ENCODE measurements at regions of chr9 and their contacts with region 1.

Region 1: GRCh38 chr9:70398145-70398556 is 16.3 kb downstream of the KLF9 start:
- DNase-seq: peak; percentile 55
- ATAC-seq: peak; percentile 98
- H3K4me3 ChIP-seq: no peak overlapping the region
- H3K27ac ChIP-seq: no peak overlapping the region; the same call in 1 of the 2 replicates
- H3K4me1 ChIP-seq: peaks cover 13% of the 10 kb centered on the region
- H3K27me3 ChIP-seq: no peaks in the 10 kb centered on the region
- CTCF ChIP-seq: no peak
- EP300 ChIP-seq: peak in 1 of 2 experiments; percentile 27; a peak in 1 of 4 replicates
- POLR2A ChIP-seq: no peak
- RAD21 ChIP-seq: no peak

Region 2: DNA sequence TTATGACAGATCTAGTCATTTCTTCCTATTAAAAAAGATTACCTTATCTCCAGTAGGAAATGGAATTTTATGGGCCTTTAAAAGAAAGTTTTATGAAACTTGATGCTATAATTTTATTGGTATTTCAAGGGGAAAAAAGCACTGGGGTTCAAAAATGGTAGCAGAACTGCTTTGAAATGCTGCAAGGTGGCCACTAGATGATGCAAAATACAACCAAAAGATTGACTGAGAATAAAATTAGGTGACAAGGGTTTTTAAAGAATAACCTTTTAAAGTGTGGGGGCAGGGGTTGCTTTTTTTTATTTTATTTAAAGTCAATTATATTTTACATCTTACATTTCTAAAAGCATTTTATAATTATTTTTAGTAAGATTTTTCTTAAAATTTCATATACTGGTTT is 45.3 kb before region 1 on chr9:
- CTCF ChIA-PET with region 1: no interaction called
- POLR2A ChIA-PET with region 1: no interaction called
- RAD21 ChIA-PET with region 1: no interaction called
- SMC1A ChIA-PET with region 1: interaction called, 3 read pairs
- in situ Hi-C with region 1: loop called (anchors 5 kb)
- intact Hi-C with region 1: no loop called
- DNase-seq: no peak
- ATAC-seq: no peak
- H3K4me3 ChIP-seq: no peak overlapping the region
- H3K27ac ChIP-seq: no peak overlapping the region
- H3K4me1 ChIP-seq: no peaks in the 10 kb centered on the region
- H3K27me3 ChIP-seq: no peaks in the 10 kb centered on the region
- CTCF ChIP-seq: peak; percentile 43 to 47 (median 45); a peak in 5 of 6 replicates
- EP300 ChIP-seq: no peak
- POLR2A ChIP-seq: no peak
- RAD21 ChIP-seq: peak; percentile 59

Region 3: DNA sequence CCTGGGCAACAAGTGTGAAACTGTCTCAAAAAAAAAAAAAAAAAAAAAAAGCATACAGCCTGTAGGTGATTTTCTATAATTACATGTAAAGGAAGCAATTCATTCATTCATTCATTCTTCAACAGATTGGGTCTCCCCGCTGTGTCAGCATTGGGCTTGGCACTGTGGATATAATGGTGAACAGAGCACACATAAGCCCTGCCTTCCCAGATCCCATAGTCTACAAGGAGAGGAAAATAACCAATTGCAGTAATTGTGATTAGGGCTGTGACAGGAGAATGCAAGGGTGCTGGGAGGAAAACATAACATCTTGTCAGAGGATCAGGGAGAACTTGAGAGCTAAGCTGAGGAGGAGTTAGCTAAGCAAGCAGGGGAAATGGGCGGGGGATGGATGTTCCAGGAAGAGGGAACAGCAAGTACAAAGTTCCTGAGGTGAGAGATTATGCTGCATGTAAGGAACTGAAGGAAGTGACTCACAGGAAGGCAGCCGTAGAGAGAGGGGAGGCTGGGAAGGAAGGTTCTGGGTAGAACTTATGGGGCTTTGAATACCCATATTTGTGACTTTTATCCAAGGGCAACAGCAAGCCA is 40.3 kb after region 1 on chr9:
- CTCF ChIA-PET with region 1: no interaction called
- POLR2A ChIA-PET with region 1: no interaction called
- RAD21 ChIA-PET with region 1: no interaction called
- SMC1A ChIA-PET with region 1: no interaction called
- in situ Hi-C with region 1: no loop called
- intact Hi-C with region 1: no loop called
- DNase-seq: no peak
- ATAC-seq: no peak
- H3K4me3 ChIP-seq: no peak overlapping the region
- H3K27ac ChIP-seq: no peak overlapping the region
- H3K4me1 ChIP-seq: no peaks in the 10 kb centered on the region
- H3K27me3 ChIP-seq: no peaks in the 10 kb centered on the region
- CTCF ChIP-seq: no peak
- EP300 ChIP-seq: no peak
- POLR2A ChIP-seq: no peak
- RAD21 ChIP-seq: no peak